RWPE1 (cell line): ENCODE measurements at regions of chr14 and their contacts with region 1.

Region 1: GRCh38 chr14:89973234-89973823 is 17.6 kb downstream of the TDP1 start:
- DNase-seq: peak; percentile 68
- H3K27ac ChIP-seq: no peak overlapping the region
- CTCF ChIP-seq: peak; percentile 82

Region 2: DNA sequence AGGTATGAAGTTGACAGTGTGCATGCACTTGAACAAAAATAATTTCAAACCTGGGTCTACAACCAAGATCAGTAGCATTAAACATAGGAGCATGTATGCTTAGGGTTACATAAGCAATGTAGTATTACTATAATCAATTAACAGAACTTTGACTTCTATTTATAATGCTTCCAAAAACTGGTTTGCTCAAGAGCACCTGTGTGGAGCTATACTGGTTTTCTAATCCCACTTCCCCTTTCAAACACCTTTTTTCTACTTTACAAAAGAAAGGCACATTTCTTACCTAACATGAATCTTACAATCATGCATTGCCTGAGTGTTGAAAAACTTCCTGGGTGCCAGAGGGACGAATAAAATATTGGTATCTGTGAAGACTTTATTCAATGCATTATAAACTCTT is 91.5 kb before region 1 on chr14:
- CTCF ChIA-PET with region 1: no interaction called
- POLR2A ChIA-PET with region 1: no interaction called
- DNase-seq: no peak
- H3K27ac ChIP-seq: no peak overlapping the region
- CTCF ChIP-seq: no peak

Region 3: GRCh38 chr14:90235179-90235976 is 262.0 kb after region 1 on chr14:
- CTCF ChIA-PET with region 1: interaction called, 25 read pairs
- POLR2A ChIA-PET with region 1: no interaction called
- DNase-seq: peak; percentile 74
- H3K27ac ChIP-seq: no peak overlapping the region
- CTCF ChIP-seq: peak; percentile 92